CD8-positive, alpha-beta T cell (primary cell): ENCODE measurements at regions of chr3 and their contacts with region 1.

Region 1: GRCh38 chr3:48716982-48717746 is at the start of gene IP6K2:
- DNase-seq: peak; percentile 97 to 99 (median 99)
- ATAC-seq: peak; percentile 99
- H3K4me3 ChIP-seq: peak within 1 kb of the TSS; percentile 90 to 100
- H3K4me3 Mint-ChIP-seq: peak within 1 kb of the TSS; percentile 99
- H3K27ac ChIP-seq: peak within 1 kb of the TSS; percentile 87 to 97
- H3K27ac Mint-ChIP-seq: peak within 1 kb of the TSS; percentile 97
- H3K4me1 ChIP-seq: peaks cover 27% of the 10 kb centered on the region
- H3K4me1 Mint-ChIP-seq: peaks cover 48% of the 10 kb centered on the region
- H3K27me3 ChIP-seq: no peaks in the 10 kb centered on the region
- H3K27me3 Mint-ChIP-seq: no peaks in the 10 kb centered on the region
- CTCF ChIP-seq: no peak
- total RNA-seq, gene IP6K2: 118 to 123 TPM

Region 2: GRCh38 chr3:48088749-48089466 is 628.3 kb before region 1 on chr3:
- CTCF ChIA-PET with region 1: no interaction called
- POLR2A ChIA-PET with region 1: no interaction called
- intact Hi-C with region 1: loop called in 1 of 2 experiments (anchors 2 kb)
- DNase-seq: peak; percentile 89 to 97 (median 94)
- ATAC-seq: peak; percentile 91
- H3K4me3 ChIP-seq: peak overlapping the region; percentile 80 to 100
- H3K4me3 Mint-ChIP-seq: peak overlapping the region; percentile 96
- H3K27ac ChIP-seq: peak overlapping the region; percentile 86 to 95
- H3K27ac Mint-ChIP-seq: peak overlapping the region; percentile 98
- H3K4me1 ChIP-seq: peaks cover 18% of the 10 kb centered on the region
- H3K4me1 Mint-ChIP-seq: peaks cover 33% of the 10 kb centered on the region
- H3K27me3 ChIP-seq: no peaks in the 10 kb centered on the region
- H3K27me3 Mint-ChIP-seq: no peaks in the 10 kb centered on the region
- CTCF ChIP-seq: no peak

Region 3: DNA sequence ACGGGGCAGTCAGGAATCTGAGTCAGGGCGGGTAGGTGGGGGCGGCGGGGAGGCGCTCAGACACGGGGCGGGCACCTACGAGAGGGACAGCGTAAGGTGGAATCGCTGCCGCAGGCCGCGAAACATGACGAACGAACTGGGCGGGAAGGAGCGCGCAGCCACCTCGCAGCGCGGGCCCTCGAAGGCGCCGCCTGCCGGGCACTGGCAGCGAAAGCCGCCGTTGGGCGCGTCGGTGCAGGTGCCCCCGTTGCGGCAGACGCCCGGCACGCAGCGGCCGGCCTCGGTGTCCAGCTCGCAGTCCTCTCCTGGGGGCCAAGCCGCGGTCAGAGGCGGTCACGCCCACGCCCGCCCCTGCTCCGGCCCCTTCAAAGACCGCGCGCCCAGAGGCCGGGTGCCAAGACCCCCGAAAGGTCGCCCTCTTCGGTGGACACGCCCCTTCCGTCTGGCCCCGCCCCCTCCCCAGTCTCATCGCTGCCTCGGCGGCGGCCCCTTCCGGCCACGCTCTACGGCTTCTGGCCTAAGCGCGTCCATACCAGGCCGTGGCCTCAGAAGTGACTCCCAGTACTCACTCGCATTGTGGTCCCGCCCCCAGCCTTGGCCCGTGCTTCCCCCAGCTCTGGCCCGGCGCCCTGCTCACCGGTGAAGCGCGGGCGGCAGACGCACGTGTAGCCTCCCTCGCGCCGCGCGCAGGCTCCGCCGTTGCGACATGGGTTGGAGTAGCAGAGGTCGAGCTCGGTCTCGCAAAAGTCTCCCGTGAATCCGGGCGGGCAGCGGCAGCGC is 60.9 kb before region 1 on chr3:
- CTCF ChIA-PET with region 1: no interaction called
- POLR2A ChIA-PET with region 1: no interaction called
- intact Hi-C with region 1: loop called (anchors 2 kb)
- DNase-seq: peak; percentile 71 to 94 (median 83)
- ATAC-seq: peak; percentile 81
- H3K4me3 ChIP-seq: peak overlapping the region; percentile 53 to 83
- H3K4me3 Mint-ChIP-seq: peak overlapping the region; percentile 83
- H3K27ac ChIP-seq: peak overlapping the region; percentile 65 to 68
- H3K27ac Mint-ChIP-seq: peak overlapping the region; percentile 90
- H3K4me1 ChIP-seq: peaks cover 18% of the 10 kb centered on the region
- H3K4me1 Mint-ChIP-seq: peaks cover 18% of the 10 kb centered on the region
- H3K27me3 ChIP-seq: peaks cover 0 to 4% of the 10 kb centered on the region in 2 experiments
- H3K27me3 Mint-ChIP-seq: peaks cover 11% of the 10 kb centered on the region
- CTCF ChIP-seq: peak; percentile 60

Region 4: GRCh38 chr3:48685602-48686511 is 31.3 kb before region 1 on chr3 and contains the start of gene NCKIPSD:
- CTCF ChIA-PET with region 1: interaction called, 5 read pairs
- POLR2A ChIA-PET with region 1: interaction called, 3 read pairs
- intact Hi-C with region 1: loop called (anchors 1 kb)
- DNase-seq: peak; percentile 81 to 97 (median 91)
- ATAC-seq: peak; percentile 92
- H3K4me3 ChIP-seq: peak within 1 kb of the TSS; percentile 63 to 85
- H3K4me3 Mint-ChIP-seq: peak within 1 kb of the TSS; percentile 93
- H3K27ac ChIP-seq: peak within 1 kb of the TSS; percentile 58 to 82
- H3K27ac Mint-ChIP-seq: peak within 1 kb of the TSS; percentile 91
- H3K4me1 ChIP-seq: peaks cover 18% of the 10 kb centered on the region
- H3K4me1 Mint-ChIP-seq: peaks cover 22% of the 10 kb centered on the region
- H3K27me3 ChIP-seq: no peaks in the 10 kb centered on the region
- H3K27me3 Mint-ChIP-seq: no peaks in the 10 kb centered on the region
- CTCF ChIP-seq: peak; percentile 93
- total RNA-seq, gene NCKIPSD: 7.7 to 8.1 TPM

Region 5: GRCh38 chr3:48898383-48899234 is 181.4 kb after region 1 on chr3 and contains the start of gene SLC25A20:
- CTCF ChIA-PET with region 1: no interaction called
- POLR2A ChIA-PET with region 1: interaction called, 4 read pairs
- intact Hi-C with region 1: loop called in 1 of 2 experiments (anchors 1 kb)
- DNase-seq: peak; percentile 78 to 94 (median 89)
- ATAC-seq: peak; percentile 96
- H3K4me3 ChIP-seq: peak within 1 kb of the TSS; percentile 90 to 94
- H3K4me3 Mint-ChIP-seq: peak within 1 kb of the TSS; percentile 96
- H3K27ac ChIP-seq: peak within 1 kb of the TSS; percentile 50 to 96
- H3K27ac Mint-ChIP-seq: peak within 1 kb of the TSS; percentile 83
- H3K4me1 ChIP-seq: peaks cover 37% of the 10 kb centered on the region
- H3K4me1 Mint-ChIP-seq: peaks cover 37% of the 10 kb centered on the region
- H3K27me3 ChIP-seq: no peaks in the 10 kb centered on the region
- H3K27me3 Mint-ChIP-seq: no peaks in the 10 kb centered on the region
- CTCF ChIP-seq: no peak
- total RNA-seq, gene SLC25A20: 0.46 to 0.64 TPM

Region 6: GRCh38 chr3:49007068-49007770 is 290.1 kb after region 1 on chr3 and contains the start of gene WDR6:
- CTCF ChIA-PET with region 1: no interaction called
- POLR2A ChIA-PET with region 1: interaction called, 3 read pairs
- intact Hi-C with region 1: loop called in 1 of 2 experiments (anchors 5 kb)
- DNase-seq: peak; percentile 94 to 99 (median 96)
- ATAC-seq: peak; percentile 87
- H3K4me3 ChIP-seq: peak within 1 kb of the TSS; percentile 87 to 92
- H3K4me3 Mint-ChIP-seq: peak within 1 kb of the TSS; percentile 100
- H3K27ac ChIP-seq: peak within 1 kb of the TSS; percentile 81 to 92
- H3K27ac Mint-ChIP-seq: peak within 1 kb of the TSS; percentile 99
- H3K4me1 ChIP-seq: peaks cover 15% of the 10 kb centered on the region
- H3K4me1 Mint-ChIP-seq: peaks cover 30% of the 10 kb centered on the region
- H3K27me3 ChIP-seq: no peaks in the 10 kb centered on the region
- H3K27me3 Mint-ChIP-seq: no peaks in the 10 kb centered on the region
- CTCF ChIP-seq: peak; percentile 34
- total RNA-seq, gene WDR6: 112 to 130 TPM